ENCODE measurements at regions of chr12 and their contacts with region 1.

Region 1: DNA sequence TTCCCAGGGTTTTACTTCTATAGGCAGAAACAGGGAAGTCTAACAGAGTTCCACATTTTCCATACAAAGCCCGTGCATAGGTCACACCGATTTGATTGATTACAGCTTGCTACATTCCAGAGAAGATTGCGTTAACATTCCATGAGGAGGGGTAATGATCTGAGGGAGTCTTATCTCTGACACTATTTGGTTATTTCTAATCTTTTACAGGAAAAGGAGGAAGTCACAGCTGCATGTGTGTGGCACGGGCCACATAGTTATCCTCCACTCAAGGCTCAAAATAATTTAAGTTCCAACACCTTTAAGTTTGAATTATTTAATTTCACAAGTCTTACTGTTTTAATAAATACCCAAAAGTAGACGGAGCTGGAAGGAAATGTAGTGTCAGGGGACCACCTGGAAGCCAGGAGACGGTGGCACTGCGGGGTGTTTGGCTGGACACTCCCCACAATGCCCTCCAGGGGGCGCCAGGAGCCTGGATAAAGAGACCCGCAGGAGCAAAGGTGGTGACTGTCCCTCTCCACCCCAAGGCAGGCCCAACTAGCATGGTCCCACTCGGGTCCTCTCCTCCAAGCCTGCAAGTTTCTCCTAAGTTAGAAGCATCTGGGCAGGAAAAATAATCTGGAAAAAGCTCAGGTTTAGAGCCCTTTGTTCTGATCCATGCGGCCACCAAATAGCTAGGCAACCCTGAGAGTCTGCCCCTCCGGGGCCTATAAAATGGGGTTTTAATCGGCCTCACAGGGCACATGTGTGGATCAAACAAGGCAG is 20.2 kb downstream of the KRT8 start:
- DNase-seq: peak; percentile 84
- ATAC-seq: peak; percentile 86
- H3K4me3 Mint-ChIP-seq: no peak overlapping the region
- H3K27ac Mint-ChIP-seq: no peak overlapping the region
- H3K4me1 Mint-ChIP-seq: peaks cover 4% of the 10 kb centered on the region
- H3K27me3 Mint-ChIP-seq: peaks cover 14% of the 10 kb centered on the region

Region 2: GRCh38 chr12:52372216-52373154 is 512.2 kb before region 1 on chr12:
- CTCF ChIA-PET with region 1: interaction called, 58 read pairs
- DNase-seq: peak; percentile 73
- ATAC-seq: peak; percentile 58
- H3K4me3 Mint-ChIP-seq: no peak overlapping the region
- H3K27ac Mint-ChIP-seq: no peak overlapping the region
- H3K4me1 Mint-ChIP-seq: no peaks in the 10 kb centered on the region
- H3K27me3 Mint-ChIP-seq: peaks cover 36% of the 10 kb centered on the region

Region 3: GRCh38 chr12:52903285-52903854 is 18.7 kb after region 1 on chr12:
- CTCF ChIA-PET with region 1: interaction called, 16 read pairs
- DNase-seq: peak; percentile 67
- ATAC-seq: peak; percentile 85
- H3K4me3 Mint-ChIP-seq: peak overlapping the region; percentile 5
- H3K27ac Mint-ChIP-seq: no peak overlapping the region
- H3K4me1 Mint-ChIP-seq: peaks cover 4% of the 10 kb centered on the region
- H3K27me3 Mint-ChIP-seq: no peaks in the 10 kb centered on the region

Region 4: DNA sequence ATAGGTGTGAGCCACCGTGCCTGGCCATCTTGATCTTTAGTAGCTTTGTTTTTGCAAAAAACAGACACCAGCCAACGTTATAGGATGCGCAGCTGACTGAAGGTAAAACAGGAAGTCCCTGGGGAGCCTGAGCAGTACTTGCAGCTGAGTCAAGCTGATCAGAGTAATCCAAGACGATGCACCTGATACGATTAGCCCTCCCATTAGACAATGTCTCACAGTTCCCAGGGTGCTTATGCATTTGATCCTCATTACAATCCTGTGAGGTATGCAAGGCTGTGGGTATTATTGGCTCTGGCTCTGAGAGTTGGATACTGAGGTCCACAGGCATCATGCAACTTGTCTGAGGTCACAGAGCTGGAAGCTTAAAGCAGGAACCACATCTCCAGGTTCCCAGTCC is 72.3 kb after region 1 on chr12:
- CTCF ChIA-PET with region 1: interaction called, 18 read pairs
- DNase-seq: no peak
- ATAC-seq: no peak
- H3K4me3 Mint-ChIP-seq: no peak overlapping the region
- H3K27ac Mint-ChIP-seq: no peak overlapping the region
- H3K4me1 Mint-ChIP-seq: peaks cover 3% of the 10 kb centered on the region
- H3K27me3 Mint-ChIP-seq: peaks cover 4% of the 10 kb centered on the region

Region 5: DNA sequence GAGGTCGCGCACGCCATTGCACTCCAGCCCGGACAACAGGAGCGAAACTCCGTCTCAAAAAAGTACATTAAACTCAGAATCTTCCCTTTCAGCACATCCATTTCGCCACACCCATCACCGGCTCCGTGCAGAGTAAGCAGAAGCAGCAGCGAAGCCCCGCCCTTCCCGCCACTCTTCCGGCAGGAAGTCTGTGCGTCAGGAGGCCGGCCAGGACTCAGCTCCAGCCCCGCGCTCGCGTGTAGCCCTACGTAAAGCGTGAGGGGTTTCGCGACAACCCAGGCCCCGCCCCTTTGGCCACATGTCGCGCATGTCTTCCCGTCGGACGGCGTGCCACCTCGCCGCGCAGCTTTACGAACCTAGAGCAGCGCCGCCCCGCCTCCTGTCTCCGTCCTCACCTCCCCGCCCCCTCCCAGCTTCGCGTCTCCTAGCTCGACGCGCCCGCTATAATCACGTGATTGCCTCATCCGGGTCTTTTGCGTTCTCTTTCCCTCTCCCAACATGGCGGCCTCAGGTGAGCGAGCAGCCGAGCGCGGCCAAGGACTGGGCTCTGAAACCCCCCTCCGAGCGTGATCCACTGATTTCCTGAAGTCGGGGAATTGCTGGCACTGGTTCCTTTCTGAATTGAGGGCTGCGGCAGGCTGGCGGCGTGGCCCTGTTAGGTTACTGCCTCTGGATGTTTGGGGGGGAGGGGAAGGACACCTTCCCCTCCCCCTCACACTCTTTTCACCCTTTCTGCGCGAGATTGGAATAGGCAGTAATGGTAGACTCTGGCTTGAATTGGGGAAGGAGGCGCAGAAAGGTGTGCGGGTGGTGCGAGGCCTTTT is 121.5 kb after region 1 on chr12 and contains the start of gene EIF4B:
- CTCF ChIA-PET with region 1: interaction called, 11 read pairs
- DNase-seq: peak; percentile 100
- ATAC-seq: peak; percentile 96
- H3K4me3 Mint-ChIP-seq: peak within 1 kb of the TSS; percentile 83
- H3K27ac Mint-ChIP-seq: peak within 1 kb of the TSS; percentile 95
- H3K4me1 Mint-ChIP-seq: peaks cover 46% of the 10 kb centered on the region
- H3K27me3 Mint-ChIP-seq: no peaks in the 10 kb centered on the region
- total RNA-seq, gene EIF4B: 264 to 382 TPM